Uterus (tissue), 4 donors: ENCODE measurements at regions of chr1 and their contacts with region 1.

Region 1: GRCh38 chr1:240567066-240567465 is 44.9 kb downstream of the GREM2 start:
- DNase-seq: no peak
- H3K4me3 ChIP-seq: no peak overlapping the region
- H3K27ac ChIP-seq: no peak overlapping the region
- H3K4me1 ChIP-seq: no peaks in the 10 kb centered on the region
- H3K27me3 ChIP-seq: no peaks in the 10 kb centered on the region
- CTCF ChIP-seq: no peak
- POLR2A ChIP-seq: no peak

Region 2: DNA sequence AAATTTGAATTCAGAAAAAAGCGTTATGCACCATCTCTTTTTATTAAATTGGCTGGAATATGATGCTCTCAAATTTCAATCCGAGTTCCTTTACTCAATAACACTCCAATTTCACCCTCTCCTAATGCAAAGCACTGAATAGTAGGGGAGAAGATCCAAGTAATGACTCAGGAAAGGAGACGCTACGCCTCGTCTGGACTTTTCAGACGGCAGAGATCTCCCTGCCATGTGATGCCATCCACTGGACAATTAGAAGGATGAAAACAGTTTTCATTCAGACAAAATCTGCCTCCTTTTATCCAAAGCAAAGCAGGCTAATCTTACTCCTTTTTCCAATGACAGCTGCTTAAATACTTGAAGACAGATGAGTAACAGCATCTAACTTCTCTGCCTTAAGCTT is 287.3 kb after region 1 on chr1:
- intact Hi-C with region 1: no loop called
- DNase-seq: no peak
- H3K4me3 ChIP-seq: no peak overlapping the region
- H3K27ac ChIP-seq: no peak overlapping the region
- H3K4me1 ChIP-seq: no peaks in the 10 kb centered on the region
- H3K27me3 ChIP-seq: no peaks in the 10 kb centered on the region
- CTCF ChIP-seq: no peak
- POLR2A ChIP-seq: no peak

Region 3: GRCh38 chr1:240999826-241000225 is 432.8 kb after region 1 on chr1:
- intact Hi-C with region 1: loop called (anchors 5 kb)
- DNase-seq: no peak
- H3K4me3 ChIP-seq: no peak overlapping the region
- H3K27ac ChIP-seq: no peak overlapping the region
- H3K4me1 ChIP-seq: no peaks in the 10 kb centered on the region
- H3K27me3 ChIP-seq: no peaks in the 10 kb centered on the region
- CTCF ChIP-seq: no peak
- POLR2A ChIP-seq: no peak